PC-9 (cell line): ENCODE measurements at regions of chr18 and their contacts with region 1.

Region 1: DNA sequence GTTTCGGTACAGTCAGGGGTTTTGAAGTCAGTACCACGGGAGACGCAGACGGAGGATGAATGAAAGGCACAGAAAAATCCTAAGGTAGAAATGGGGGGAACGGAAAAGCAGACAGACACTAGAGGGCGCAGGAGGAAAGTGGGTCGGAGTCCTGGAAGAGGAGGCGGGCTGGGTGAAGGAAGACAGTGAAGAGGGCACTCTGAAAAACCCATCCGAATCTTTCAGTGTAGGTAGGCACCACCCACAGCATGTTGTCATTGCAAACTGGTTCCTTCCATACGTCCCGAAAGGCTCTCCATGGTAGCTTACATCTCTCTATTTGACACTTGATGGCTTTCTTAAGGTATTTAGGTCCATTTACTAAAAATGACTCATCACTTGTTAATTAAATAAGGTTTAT is 18.5 kb upstream of the ZNF236 start:
- DNase-seq: peak in 1 of 2 experiments; percentile 45
- H3K4me3 ChIP-seq: peak overlapping the region; percentile 33; the same call in 1 of the 2 replicates
- H3K27ac ChIP-seq: no peak overlapping the region
- H3K4me1 ChIP-seq: peaks cover 10% of the 10 kb centered on the region
- H3K27me3 ChIP-seq: no peaks in the 10 kb centered on the region
- CTCF ChIP-seq: peak; percentile 85

Region 2: DNA sequence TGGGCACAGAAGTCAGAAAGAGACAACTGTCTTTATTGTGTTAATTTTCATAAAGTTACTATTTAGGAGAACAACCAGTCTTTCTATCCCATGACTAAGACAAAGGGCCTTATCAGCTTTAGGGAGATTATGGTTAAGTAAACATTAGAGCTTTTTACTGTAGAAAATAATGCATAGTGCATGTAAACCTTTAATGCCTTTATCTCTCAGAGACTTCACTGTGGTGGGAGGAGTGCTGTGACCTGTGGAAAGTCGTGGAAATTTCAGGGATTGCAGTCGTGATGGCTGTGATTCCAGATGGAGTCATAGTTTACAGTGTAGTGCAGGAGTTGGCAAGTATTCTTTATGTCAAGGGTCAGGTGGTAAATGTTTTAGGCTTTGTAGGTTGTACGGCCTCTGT is 34.4 kb after region 1 on chr18:
- CTCF ChIA-PET with region 1: no interaction called
- POLR2A ChIA-PET with region 1: no interaction called
- intact Hi-C with region 1: no loop called
- DNase-seq: no peak
- H3K4me3 ChIP-seq: no peak overlapping the region
- H3K27ac ChIP-seq: no peak overlapping the region
- H3K4me1 ChIP-seq: peaks cover 19% of the 10 kb centered on the region
- H3K27me3 ChIP-seq: no peaks in the 10 kb centered on the region
- CTCF ChIP-seq: no peak

Region 3: DNA sequence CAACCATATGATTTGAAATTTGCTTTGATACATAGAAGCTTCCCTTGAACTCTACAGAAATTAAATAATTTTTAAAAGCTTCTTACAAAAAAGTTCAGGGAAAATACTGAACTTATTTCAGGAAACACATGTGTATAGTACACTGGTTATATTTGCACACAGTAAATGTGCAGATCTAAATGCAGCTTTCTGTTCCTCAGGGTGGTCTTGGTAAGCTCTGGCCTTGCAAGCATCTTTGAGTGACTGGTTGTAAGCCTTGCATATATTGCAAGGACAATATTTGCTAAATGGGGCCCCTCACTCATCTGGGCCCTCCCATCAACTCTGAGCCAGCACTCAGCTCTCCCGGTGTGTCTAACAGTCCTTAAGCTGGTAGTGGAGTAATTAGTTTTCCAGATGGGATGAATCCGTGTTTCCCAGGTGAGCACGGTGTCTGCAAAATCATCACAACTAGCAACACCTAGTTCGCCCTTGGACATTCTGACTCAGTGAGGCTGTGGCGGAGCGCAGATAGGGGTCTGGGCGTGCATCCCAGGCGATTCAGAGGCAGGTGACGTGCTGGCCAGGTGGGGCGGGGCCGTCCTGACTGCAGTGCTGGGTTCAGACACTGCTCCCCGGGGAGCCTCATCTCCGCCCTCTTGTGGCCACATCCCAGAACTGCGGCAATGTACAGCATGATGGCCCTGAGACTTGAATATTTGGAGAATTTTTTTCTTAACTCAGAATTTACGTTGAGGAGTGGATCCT is 179.2 kb after region 1 on chr18:
- CTCF ChIA-PET with region 1: no interaction called
- POLR2A ChIA-PET with region 1: no interaction called
- intact Hi-C with region 1: loop called (anchors 1 kb)
- DNase-seq: peak; percentile 69 to 76
- H3K4me3 ChIP-seq: no peak overlapping the region
- H3K27ac ChIP-seq: no peak overlapping the region
- H3K4me1 ChIP-seq: no peaks in the 10 kb centered on the region
- H3K27me3 ChIP-seq: no peaks in the 10 kb centered on the region
- CTCF ChIP-seq: peak; percentile 92

Region 4: DNA sequence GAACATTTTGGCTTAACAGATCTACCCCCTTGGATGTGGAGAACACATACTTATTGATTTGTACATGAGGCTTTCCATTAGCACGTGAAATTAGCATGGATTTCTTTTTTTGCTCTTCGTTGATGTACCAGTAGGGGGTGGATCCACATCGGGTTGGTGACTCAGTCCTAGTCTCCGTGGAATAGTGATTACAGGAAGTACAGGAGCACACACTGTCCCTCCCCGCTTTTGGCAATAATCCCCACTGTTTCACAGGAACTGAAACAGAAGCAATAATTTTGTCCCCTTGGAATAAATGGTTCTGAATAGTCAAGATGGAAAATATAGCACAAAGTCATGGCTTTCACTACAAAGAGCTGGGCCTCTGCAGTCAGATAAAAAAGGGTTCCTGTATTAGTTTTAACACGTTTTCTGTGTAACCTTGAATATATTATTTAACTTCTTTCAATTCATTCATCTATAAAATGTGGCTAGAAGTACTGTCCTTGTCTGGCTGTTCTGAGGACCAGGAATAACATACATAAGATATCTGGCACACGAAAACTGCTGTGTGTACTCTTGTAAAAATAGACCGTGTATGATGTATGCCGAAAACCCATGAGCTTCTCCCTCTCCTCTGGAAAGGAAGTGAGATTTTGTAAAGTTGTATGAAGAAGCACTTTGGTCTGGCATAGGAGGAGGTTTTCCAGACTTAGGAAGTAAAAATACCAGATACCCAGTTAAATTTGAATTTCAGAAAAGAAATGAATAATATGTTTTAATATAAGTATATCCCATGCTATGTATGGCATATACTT is 675.0 kb after region 1 on chr18:
- CTCF ChIA-PET with region 1: no interaction called
- POLR2A ChIA-PET with region 1: no interaction called
- intact Hi-C with region 1: loop called (anchors 10 kb)
- DNase-seq: no peak
- H3K4me3 ChIP-seq: no peak overlapping the region
- H3K27ac ChIP-seq: no peak overlapping the region
- H3K4me1 ChIP-seq: no peaks in the 10 kb centered on the region
- H3K27me3 ChIP-seq: peaks cover 16% of the 10 kb centered on the region; the same call in 1 of the 2 replicates
- CTCF ChIP-seq: no peak; the same call in 1 of the 2 replicates